MCF 10A (cell line): ENCODE measurements at regions of chr20 and their contacts with region 1.

Region 1: DNA sequence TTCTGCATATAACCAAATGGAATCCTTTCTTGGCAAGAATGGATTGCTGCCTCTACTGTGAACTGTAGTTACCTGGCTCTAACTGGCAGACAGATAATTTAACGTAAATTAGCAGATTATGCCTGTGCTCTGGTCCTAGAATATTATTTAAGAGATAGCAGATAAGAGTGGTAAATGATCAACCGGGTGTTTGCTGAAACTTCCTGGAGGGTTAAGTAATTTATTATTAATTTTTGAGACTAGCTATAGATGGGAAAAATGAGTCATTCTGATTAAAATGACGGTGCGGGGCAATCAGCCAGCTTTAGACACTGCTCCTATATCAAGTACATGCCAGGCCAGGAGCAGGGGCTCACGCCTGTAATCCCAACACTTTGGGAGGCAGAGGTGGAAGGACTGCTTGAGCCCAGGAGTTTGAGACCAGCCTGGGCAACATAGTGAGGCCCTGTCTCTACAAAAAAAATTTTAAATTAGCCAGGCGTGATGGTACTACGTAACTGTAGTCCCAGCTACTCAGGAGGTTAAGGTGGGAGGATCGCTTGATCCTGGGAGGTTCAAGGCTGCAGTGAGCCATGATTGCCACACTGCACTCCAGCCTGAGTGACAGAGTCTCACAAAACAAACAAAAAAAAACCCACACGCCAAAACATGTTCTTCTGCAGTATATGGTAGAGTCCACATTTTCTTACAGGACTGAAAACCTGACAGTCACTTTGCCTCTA is 22.6 kb downstream of the B4GALT5 start:
- DNase-seq: peak; percentile 75
- H3K4me3 Mint-ChIP-seq: no peak overlapping the region
- H3K27ac Mint-ChIP-seq: peak overlapping the region; percentile 81
- H3K4me1 Mint-ChIP-seq: peaks cover 48% of the 10 kb centered on the region
- H3K27me3 Mint-ChIP-seq: no peaks in the 10 kb centered on the region
- CTCF ChIP-seq: no peak

Region 2: GRCh38 chr20:49676581-49677291 is 14.3 kb before region 1 on chr20:
- CTCF ChIA-PET with region 1: interaction called, 6 read pairs
- POLR2A ChIA-PET with region 1: interaction called, 25 read pairs
- intact Hi-C with region 1: no loop called
- DNase-seq: peak; percentile 68
- H3K4me3 Mint-ChIP-seq: peak overlapping the region; percentile 22
- H3K27ac Mint-ChIP-seq: peak overlapping the region; percentile 66
- H3K4me1 Mint-ChIP-seq: peaks cover 69% of the 10 kb centered on the region
- H3K27me3 Mint-ChIP-seq: no peaks in the 10 kb centered on the region
- CTCF ChIP-seq: no peak